ENCODE measurements at regions of chr11 and their contacts with region 1.

Region 1: DNA sequence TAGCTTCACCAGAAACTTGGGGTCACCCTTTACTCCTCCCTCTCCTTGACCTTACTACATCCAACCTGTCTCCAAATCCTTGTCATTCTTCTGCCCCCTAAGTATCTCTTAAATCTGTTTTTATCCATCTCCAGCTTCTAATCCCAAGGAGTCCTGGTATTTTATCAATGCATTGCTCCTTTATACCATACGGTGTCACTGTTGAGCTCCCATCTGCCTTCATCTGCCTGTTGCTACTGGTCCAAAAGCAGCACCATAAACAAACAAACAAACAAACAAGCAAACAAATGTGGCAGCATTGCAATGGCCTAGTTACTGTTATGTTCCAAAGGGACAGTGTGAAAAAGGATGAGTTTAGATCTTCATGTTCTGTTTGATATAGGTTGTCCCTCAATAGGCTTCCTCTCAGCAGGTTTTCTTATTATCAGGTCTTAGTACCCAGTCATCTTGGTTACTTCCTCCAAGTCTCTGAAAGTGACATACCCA is 34.2 kb downstream of the DNHD1 start:
- DNase-seq: peak in 3 of 9 experiments; percentile 14 to 68 (median 56)
- ATAC-seq: peak; percentile 83
- H3K4me3 ChIP-seq: no peak overlapping the region
- H3K4me3 Mint-ChIP-seq: no peak overlapping the region
- H3K27ac ChIP-seq: no peak overlapping the region
- H3K27ac Mint-ChIP-seq: no peak overlapping the region
- H3K4me1 ChIP-seq: peaks cover 4% of the 10 kb centered on the region
- H3K4me1 Mint-ChIP-seq: peaks cover 7% of the 10 kb centered on the region
- H3K27me3 ChIP-seq: no peaks in the 10 kb centered on the region
- H3K27me3 Mint-ChIP-seq: no peaks in the 10 kb centered on the region
- CTCF ChIP-seq: peak; percentile 84

Region 2: DNA sequence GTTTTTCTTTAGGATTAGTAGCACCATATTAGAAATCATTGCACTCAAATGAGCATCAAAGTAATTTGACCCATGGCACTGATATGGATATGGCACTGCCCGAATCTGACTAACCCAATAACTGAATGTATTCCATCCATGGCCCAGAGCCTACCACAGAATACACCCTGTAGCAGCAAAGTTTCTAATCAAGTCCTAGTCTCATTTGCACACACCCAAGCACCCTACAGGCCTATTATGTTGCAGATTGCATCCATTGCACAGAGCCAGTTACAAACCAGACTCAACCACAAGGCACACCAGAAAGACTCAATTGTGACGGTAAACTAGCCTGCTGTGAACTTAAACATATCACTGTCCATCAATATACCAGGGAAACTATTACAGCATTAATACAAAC is 631.8 kb before region 1 on chr11:
- CTCF ChIA-PET with region 1: no interaction called
- POLR2A ChIA-PET with region 1: no interaction called
- intact Hi-C with region 1: no loop called
- DNase-seq: no peak
- ATAC-seq: no peak
- H3K4me3 ChIP-seq: no peak overlapping the region
- H3K4me3 Mint-ChIP-seq: no peak overlapping the region
- H3K27ac ChIP-seq: no peak overlapping the region
- H3K27ac Mint-ChIP-seq: no peak overlapping the region
- H3K4me1 ChIP-seq: no peaks in the 10 kb centered on the region
- H3K4me1 Mint-ChIP-seq: no peaks in the 10 kb centered on the region
- H3K27me3 ChIP-seq: no peaks in the 10 kb centered on the region
- H3K27me3 Mint-ChIP-seq: no peaks in the 10 kb centered on the region
- CTCF ChIP-seq: no peak

Region 3: GRCh38 chr11:6219359-6219758 is 312.0 kb before region 1 on chr11:
- CTCF ChIA-PET with region 1: no interaction called
- POLR2A ChIA-PET with region 1: no interaction called
- intact Hi-C with region 1: no loop called
- DNase-seq: no peak
- ATAC-seq: no peak
- H3K4me3 ChIP-seq: no peak overlapping the region
- H3K4me3 Mint-ChIP-seq: no peak overlapping the region
- H3K27ac ChIP-seq: no peak overlapping the region
- H3K27ac Mint-ChIP-seq: no peak overlapping the region
- H3K4me1 ChIP-seq: peaks cover 7% of the 10 kb centered on the region
- H3K4me1 Mint-ChIP-seq: peaks cover 10% of the 10 kb centered on the region
- H3K27me3 ChIP-seq: no peaks in the 10 kb centered on the region
- H3K27me3 Mint-ChIP-seq: no peaks in the 10 kb centered on the region
- CTCF ChIP-seq: no peak

Region 4: GRCh38 chr11:6541356-6541755 is 10.0 kb after region 1 on chr11:
- CTCF ChIA-PET with region 1: interaction called, 13 read pairs
- POLR2A ChIA-PET with region 1: interaction called, 3 read pairs
- intact Hi-C with region 1: no loop called
- DNase-seq: no peak
- ATAC-seq: no peak
- H3K4me3 ChIP-seq: no peak overlapping the region
- H3K4me3 Mint-ChIP-seq: no peak overlapping the region
- H3K27ac ChIP-seq: no peak overlapping the region
- H3K27ac Mint-ChIP-seq: peak overlapping the region; percentile 42
- H3K4me1 ChIP-seq: no peaks in the 10 kb centered on the region
- H3K4me1 Mint-ChIP-seq: peaks cover 9% of the 10 kb centered on the region
- H3K27me3 ChIP-seq: no peaks in the 10 kb centered on the region
- H3K27me3 Mint-ChIP-seq: no peaks in the 10 kb centered on the region
- CTCF ChIP-seq: no peak

Region 5: DNA sequence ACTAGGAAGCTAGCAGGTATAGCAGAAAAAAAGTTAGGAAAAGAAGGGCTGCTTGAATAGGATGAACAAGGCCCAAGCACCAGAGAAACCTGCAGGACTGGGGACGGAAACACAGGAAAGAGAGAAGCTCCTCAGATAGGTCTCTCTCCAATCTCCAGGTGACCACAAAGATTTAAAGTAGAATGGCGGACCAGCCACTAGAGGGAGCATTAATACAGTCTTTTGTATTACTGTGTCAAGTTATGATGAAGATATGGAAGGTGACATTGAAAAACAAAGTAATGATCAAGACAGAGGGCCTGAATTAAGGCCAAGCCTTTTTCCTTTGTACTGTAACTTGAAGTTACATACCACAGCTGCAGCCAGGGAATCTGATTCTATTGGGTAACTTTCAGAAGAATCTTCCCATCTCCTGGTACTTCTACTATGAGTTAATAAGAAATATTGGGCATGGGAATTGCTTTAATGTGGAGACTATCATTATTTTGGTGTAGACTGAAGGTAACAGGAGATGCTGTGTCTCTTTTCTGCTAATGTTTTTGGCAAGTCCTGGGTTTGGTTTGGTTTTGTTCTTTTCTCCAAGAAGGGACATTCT is 206.7 kb after region 1 on chr11:
- CTCF ChIA-PET with region 1: interaction called, 13 read pairs
- POLR2A ChIA-PET with region 1: no interaction called
- intact Hi-C with region 1: no loop called
- DNase-seq: peak; percentile 44 to 87 (median 69)
- ATAC-seq: peak; percentile 54
- H3K4me3 ChIP-seq: no peak overlapping the region
- H3K4me3 Mint-ChIP-seq: peak overlapping the region; percentile 9
- H3K27ac ChIP-seq: peak overlapping the region; percentile 1 to 8
- H3K27ac Mint-ChIP-seq: peak overlapping the region; percentile 87
- H3K4me1 ChIP-seq: peaks cover 91% of the 10 kb centered on the region
- H3K4me1 Mint-ChIP-seq: peaks cover 91% of the 10 kb centered on the region
- H3K27me3 ChIP-seq: no peaks in the 10 kb centered on the region
- H3K27me3 Mint-ChIP-seq: no peaks in the 10 kb centered on the region
- CTCF ChIP-seq: peak; percentile 59

Measured in CD8-positive, alpha-beta T cell (primary cell).